IMR-90 (cell line): ENCODE measurements at regions of chr1 and their contacts with region 1.

Region 1: DNA sequence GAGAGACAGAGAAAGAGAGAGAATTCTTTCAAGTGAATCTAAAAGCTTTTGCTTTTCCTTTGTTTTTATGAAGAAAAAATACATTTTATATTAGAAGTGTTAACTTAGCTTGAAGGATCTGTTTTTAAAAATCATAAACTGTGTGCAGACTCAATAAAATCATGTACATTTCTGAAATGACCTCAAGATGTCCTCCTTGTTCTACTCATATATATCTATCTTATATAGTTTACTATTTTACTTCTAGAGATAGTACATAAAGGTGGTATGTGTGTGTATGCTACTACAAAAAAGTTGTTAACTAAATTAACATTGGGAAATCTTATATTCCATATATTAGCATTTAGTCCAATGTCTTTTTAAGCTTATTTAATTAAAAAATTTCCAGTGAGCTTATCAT is 117.6 kb downstream of the PTPRC start:
- DNase-seq: peak; percentile 36
- ATAC-seq: peak; percentile 72; the same call in 1 of the 2 replicates
- H3K4me3 ChIP-seq: no peak overlapping the region
- H3K27ac ChIP-seq: no peak overlapping the region
- H3K4me1 ChIP-seq: no peaks in the 10 kb centered on the region
- H3K27me3 ChIP-seq: no peaks in the 10 kb centered on the region
- CTCF ChIP-seq: peak; percentile 49
- POLR2A ChIP-seq: no peak
- RAD21 ChIP-seq: peak; percentile 44

Region 2: GRCh38 chr1:198788561-198789064 is 32.1 kb after region 1 on chr1:
- CTCF ChIA-PET with region 1: no interaction called
- POLR2A ChIA-PET with region 1: no interaction called
- dilution Hi-C with region 1: no loop called
- in situ Hi-C with region 1: no loop called
- intact Hi-C with region 1: no loop called
- DNase-seq: no peak
- ATAC-seq: no peak
- H3K4me3 ChIP-seq: no peak overlapping the region
- H3K27ac ChIP-seq: no peak overlapping the region
- H3K4me1 ChIP-seq: no peaks in the 10 kb centered on the region
- H3K27me3 ChIP-seq: no peaks in the 10 kb centered on the region
- CTCF ChIP-seq: peak; percentile 9; the same call in 1 of the 2 replicates
- POLR2A ChIP-seq: no peak
- RAD21 ChIP-seq: no peak

Region 3: GRCh38 chr1:199243423-199244061 is 487.1 kb after region 1 on chr1:
- CTCF ChIA-PET with region 1: no interaction called
- POLR2A ChIA-PET with region 1: no interaction called
- dilution Hi-C with region 1: no loop called
- in situ Hi-C with region 1: no loop called
- intact Hi-C with region 1: loop called (anchors 5 kb)
- DNase-seq: peak; percentile 43
- ATAC-seq: peak; percentile 85
- H3K4me3 ChIP-seq: no peak overlapping the region
- H3K27ac ChIP-seq: no peak overlapping the region
- H3K4me1 ChIP-seq: no peaks in the 10 kb centered on the region
- H3K27me3 ChIP-seq: no peaks in the 10 kb centered on the region
- CTCF ChIP-seq: peak; percentile 64
- POLR2A ChIP-seq: no peak
- RAD21 ChIP-seq: peak; percentile 79

Region 4: GRCh38 chr1:199463521-199464128 is 707.2 kb after region 1 on chr1:
- CTCF ChIA-PET with region 1: interaction called, 5 read pairs
- POLR2A ChIA-PET with region 1: no interaction called
- dilution Hi-C with region 1: no loop called
- in situ Hi-C with region 1: loop called (anchors 25 kb)
- intact Hi-C with region 1: loop called (anchors 1 kb)
- DNase-seq: peak; percentile 82
- ATAC-seq: peak; percentile 92
- H3K4me3 ChIP-seq: no peak overlapping the region
- H3K27ac ChIP-seq: no peak overlapping the region
- H3K4me1 ChIP-seq: no peaks in the 10 kb centered on the region; the same call in 1 of the 2 replicates
- H3K27me3 ChIP-seq: no peaks in the 10 kb centered on the region
- CTCF ChIP-seq: peak; percentile 71
- POLR2A ChIP-seq: no peak
- RAD21 ChIP-seq: peak; percentile 89

Region 5: GRCh38 chr1:199545780-199546179 is 789.3 kb after region 1 on chr1:
- CTCF ChIA-PET with region 1: no interaction called
- POLR2A ChIA-PET with region 1: no interaction called
- dilution Hi-C with region 1: no loop called
- in situ Hi-C with region 1: loop called (anchors 5 kb)
- intact Hi-C with region 1: no loop called
- DNase-seq: no peak
- ATAC-seq: no peak
- H3K4me3 ChIP-seq: no peak overlapping the region
- H3K27ac ChIP-seq: no peak overlapping the region
- H3K4me1 ChIP-seq: peaks cover 7% of the 10 kb centered on the region
- H3K27me3 ChIP-seq: no peaks in the 10 kb centered on the region; the same call in 1 of the 2 replicates
- CTCF ChIP-seq: 0 out of 2 replicates have a peak, but pooled peaks have one; percentile 9
- POLR2A ChIP-seq: no peak
- RAD21 ChIP-seq: no peak